Activated CD4-positive, alpha-beta T cell treated with anti-CD3 and anti-CD28 coated beads, Interleukin-2, amount 10 ng/mL, durations not matched to agents 24 days and 14 days (primary cell): ENCODE measurements at regions of chr3 and their contacts with region 1.

Region 1: DNA sequence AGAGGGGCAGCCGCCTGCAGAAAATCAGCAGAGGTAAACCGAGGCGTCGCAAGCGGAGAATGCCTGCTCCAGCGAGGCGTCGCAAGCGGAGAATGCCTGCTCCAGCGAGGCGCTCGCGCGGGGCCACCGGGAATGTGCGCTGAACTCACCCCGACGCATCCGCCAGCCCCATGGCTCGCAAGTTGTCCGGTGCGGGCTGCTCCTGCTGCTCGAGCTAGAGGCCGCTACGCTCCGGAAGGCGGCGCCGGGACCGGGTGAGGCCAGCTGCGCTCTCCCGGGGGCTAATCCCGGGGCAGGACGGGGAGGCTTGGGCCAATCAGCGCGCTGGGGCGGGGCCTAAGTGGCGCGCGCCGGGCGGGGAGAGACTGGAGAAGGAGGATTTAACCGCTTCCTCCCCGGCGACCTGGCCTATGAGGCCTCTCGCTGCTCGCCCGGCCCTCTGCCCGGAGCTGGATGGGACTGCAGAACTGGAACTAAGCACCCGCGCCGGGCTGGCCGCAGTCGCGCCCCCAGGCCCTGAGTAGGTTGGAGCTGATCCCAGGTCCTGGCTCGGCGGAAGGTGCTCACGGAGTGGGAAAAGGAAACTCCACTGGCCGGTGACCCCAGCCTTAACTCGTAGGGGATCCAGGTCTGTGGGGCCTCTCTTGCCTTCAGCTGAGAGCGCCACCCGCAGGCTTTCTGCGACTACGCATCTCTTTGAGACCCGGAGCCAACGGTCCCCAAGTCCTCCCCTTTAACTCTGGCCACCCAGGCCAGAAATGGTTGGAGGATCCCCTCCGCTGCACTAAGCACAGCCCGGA is at the start of gene SLC26A6:
- DNase-seq: peak; percentile 99
- H3K4me3 Mint-ChIP-seq: peak within 1 kb of the TSS; percentile 93
- H3K27ac Mint-ChIP-seq: peak within 1 kb of the TSS; percentile 91
- H3K4me1 Mint-ChIP-seq: peaks cover 19% of the 10 kb centered on the region
- H3K27me3 Mint-ChIP-seq: no peaks in the 10 kb centered on the region
- total RNA-seq, gene SLC26A6: 57.2 and 58.2 TPM in 2 replicates

Region 2: DNA sequence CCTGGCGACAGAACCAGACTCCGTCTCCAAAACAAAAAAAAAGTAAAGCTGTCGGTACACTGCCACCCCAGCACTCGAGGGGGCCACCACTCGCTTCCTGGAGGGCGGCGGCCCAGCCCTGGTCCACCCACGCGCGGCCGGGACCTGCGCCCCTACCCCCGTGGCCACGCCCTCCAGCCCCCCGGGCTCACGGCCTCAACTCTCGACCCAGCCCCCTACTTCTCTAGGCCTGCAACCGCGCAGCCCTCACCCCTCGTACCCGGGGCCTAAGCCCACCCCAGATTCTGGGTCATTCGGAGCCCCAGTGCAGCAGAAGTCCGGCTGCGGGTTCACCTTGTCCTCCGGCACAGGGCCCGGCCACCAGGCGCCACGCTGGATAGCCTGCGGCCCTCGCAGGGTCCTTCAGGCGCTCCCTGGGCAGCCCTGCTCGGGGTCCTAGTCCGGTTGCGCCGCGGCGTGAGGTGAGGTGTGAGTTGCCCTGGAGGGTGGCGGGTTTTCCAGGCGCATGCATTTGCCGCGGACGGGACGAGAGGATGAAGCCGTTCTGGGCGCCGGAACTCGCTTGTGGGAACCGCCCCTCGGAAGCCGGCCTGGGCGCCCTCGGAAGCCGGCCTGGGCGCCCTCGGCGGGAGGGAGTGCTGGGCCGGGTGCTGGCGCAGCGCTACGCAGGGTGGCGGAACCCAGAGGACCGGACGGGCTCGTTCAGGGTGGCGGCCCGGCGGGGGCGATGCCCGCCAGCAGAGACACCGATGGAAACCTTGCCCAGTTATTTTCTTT is 334.2 kb before region 1 on chr3:
- intact Hi-C with region 1: loop called (anchors 10 kb)
- DNase-seq: peak; percentile 97
- H3K4me3 Mint-ChIP-seq: peak within 1 kb of the TSS; percentile 96
- H3K27ac Mint-ChIP-seq: peak within 1 kb of the TSS; percentile 99
- H3K4me1 Mint-ChIP-seq: peaks cover 23% of the 10 kb centered on the region
- H3K27me3 Mint-ChIP-seq: peaks cover 14% of the 10 kb centered on the region

Region 3: GRCh38 chr3:48400824-48401433 is 234.5 kb before region 1 on chr3:
- intact Hi-C with region 1: loop called (anchors 1 kb)
- DNase-seq: peak; percentile 89
- H3K4me3 Mint-ChIP-seq: no peak overlapping the region
- H3K27ac Mint-ChIP-seq: peak overlapping the region; percentile 51
- H3K4me1 Mint-ChIP-seq: peaks cover 2% of the 10 kb centered on the region
- H3K27me3 Mint-ChIP-seq: peaks cover 4% of the 10 kb centered on the region

Region 4: GRCh38 chr3:48446425-48447193 is 188.8 kb before region 1 on chr3 and contains the start of gene ATRIP:
- intact Hi-C with region 1: loop called (anchors 1 kb)
- DNase-seq: peak; percentile 98
- H3K4me3 Mint-ChIP-seq: peak within 1 kb of the TSS; percentile 93
- H3K27ac Mint-ChIP-seq: peak within 1 kb of the TSS; percentile 91
- H3K4me1 Mint-ChIP-seq: peaks cover 25% of the 10 kb centered on the region
- H3K27me3 Mint-ChIP-seq: no peaks in the 10 kb centered on the region
- total RNA-seq, gene ATRIP: 18.3 and 20.0 TPM in 2 replicates

Region 5: GRCh38 chr3:48609088-48610005 is 26.1 kb before region 1 on chr3 and contains the start of gene UQCRC1:
- intact Hi-C with region 1: loop called (anchors 1 kb)
- DNase-seq: peak; percentile 98
- H3K4me3 Mint-ChIP-seq: peak within 1 kb of the TSS; percentile 99
- H3K27ac Mint-ChIP-seq: peak within 1 kb of the TSS; percentile 99
- H3K4me1 Mint-ChIP-seq: peaks cover 22% of the 10 kb centered on the region
- H3K27me3 Mint-ChIP-seq: no peaks in the 10 kb centered on the region
- total RNA-seq, gene UQCRC1: 224 and 235 TPM in 2 replicates

Region 6: GRCh38 chr3:48656061-48656840 is 20.8 kb after region 1 on chr3:
- intact Hi-C with region 1: loop called (anchors 1 kb)
- DNase-seq: peak; percentile 95
- H3K4me3 Mint-ChIP-seq: peak overlapping the region; percentile 85
- H3K27ac Mint-ChIP-seq: peak overlapping the region; percentile 92
- H3K4me1 Mint-ChIP-seq: peaks cover 22% of the 10 kb centered on the region
- H3K27me3 Mint-ChIP-seq: peaks cover 2% of the 10 kb centered on the region